HEK293 (cell line): ENCODE measurements at regions of chr17 and their contacts with region 1.

Region 1: GRCh38 chr17:1573916-1574696 is 11.5 kb upstream of the PITPNA start:
- H3K4me3 ChIP-seq: no peak overlapping the region
- H3K27ac ChIP-seq: no peak overlapping the region
- H3K4me1 ChIP-seq: no peaks in the 10 kb centered on the region; the same call in 1 of the 2 replicates
- CTCF ChIP-seq: peak; percentile 98

Region 2: DNA sequence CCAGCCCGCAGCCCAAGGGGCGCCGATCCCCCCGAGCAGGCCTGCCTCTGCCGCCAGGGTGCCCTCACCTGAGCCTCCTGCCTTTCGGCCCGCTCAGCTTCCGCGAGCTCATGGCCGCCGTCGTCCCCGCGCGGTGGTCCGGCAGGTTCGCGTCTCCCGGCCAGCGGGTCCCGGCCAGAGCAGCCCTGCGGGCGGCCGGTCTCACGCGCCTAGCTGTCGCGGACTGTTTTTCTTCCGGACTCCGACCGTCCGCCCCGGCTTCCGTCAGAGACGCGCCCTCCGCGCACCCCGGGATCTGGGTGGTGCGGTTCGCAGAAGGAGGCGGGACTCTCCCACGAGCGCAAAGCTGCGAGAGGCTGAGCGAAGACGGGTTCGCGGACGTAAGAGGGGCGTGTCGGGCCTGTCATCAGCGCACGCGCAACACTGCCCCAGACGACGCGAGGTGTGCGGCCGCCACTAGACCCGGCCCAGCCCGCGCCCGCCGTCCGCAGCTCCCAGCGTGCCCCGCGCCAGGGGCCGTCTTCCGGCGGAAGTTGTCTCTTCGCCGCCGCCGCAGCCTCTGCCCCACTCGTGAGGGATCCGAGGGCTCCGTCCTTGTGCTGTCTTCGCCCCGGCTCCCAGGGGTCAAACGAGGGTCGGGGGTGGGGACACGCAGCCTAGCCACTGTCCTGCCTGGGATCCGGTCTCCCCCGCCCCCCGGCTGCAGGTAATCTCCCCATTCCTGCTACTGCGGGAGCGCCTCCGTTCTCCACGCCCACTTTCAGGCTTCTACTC is 57.5 kb before region 1 on chr17 and contains the start of gene INPP5K:
- CTCF ChIA-PET with region 1: interaction called, 11 read pairs
- POLR2A ChIA-PET with region 1: interaction called, 5 read pairs
- H3K4me3 ChIP-seq: peak within 1 kb of the TSS; percentile 96
- H3K27ac ChIP-seq: peak within 1 kb of the TSS; percentile 62
- H3K4me1 ChIP-seq: no peaks in the 10 kb centered on the region
- CTCF ChIP-seq: peak; percentile 57

Region 3: DNA sequence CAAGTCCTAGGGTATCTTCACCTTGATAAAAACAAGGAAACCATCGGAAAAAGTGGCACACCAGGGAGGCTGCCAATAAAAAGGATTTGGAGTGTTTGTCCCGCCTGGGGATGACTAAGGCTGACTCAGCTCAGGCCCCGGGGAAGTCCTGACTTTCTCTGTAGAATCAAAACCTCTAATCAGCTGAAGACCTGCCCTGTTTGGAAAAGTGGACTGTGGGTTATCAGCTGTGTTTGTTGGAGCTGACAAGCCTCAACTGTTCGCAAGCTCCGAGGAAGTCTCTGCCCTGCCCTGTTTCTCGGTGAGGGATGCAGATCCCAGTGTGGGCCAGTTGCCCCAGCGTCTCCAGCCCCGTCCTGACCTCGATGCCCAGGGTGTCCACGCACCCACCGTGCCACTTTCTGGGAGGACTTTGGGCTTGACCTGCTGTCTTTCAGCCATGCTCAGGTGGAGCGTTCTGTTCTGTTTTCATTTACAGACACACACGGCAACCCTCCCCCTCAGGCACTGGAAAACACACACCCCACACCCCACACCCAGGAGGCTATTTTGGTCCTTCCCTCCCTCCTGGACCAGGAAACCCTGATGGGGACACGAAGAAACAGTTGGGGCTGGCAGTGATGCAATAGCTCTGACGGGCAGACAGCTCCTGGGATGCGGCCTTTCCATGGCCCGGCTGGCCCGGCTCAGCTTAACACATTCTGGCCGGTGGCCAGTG is 16.1 kb after region 1 on chr17:
- CTCF ChIA-PET with region 1: interaction called, 14 read pairs
- POLR2A ChIA-PET with region 1: interaction called, 7 read pairs
- H3K4me3 ChIP-seq: no peak overlapping the region
- H3K27ac ChIP-seq: no peak overlapping the region
- H3K4me1 ChIP-seq: peaks cover 8% of the 10 kb centered on the region
- CTCF ChIP-seq: no peak

Region 4: DNA sequence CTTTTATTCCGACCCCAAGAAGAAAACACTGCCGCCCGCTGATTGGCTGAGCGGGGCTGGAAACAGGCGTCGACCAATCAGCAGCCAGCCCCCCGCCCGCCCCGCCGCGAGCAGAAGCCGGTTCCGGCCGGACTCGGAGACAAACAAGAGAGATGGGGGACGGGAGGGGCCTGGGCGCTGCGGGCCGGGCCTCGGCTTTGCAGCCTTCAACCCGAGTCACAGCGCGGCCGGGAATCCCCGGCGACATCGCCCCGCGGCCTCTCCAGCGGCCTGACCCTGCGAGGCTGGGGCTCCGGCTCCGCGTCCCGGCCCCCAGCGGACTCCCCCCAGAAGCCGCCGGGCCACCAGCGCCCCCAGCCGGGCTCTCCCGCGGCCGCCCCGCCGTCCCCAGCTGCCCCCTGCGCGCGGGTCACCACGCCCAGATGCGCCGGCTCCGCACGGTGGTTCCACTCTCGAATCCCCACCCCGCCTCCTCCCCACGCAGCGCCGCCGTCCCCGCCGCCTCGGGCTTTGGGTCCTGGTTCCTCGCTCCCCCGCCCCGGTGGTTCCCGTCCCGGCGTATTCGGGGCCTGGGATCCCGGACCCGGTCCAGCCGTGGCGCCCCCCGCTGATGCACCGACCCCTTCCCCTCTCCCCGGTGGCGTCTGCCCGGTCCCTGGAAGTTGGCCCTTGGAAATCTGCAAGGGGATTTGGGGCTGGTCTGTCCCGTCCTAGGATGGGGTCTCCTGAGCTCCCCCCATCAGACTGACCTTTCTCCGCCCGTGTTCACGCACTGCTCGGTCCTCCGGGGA is 54.9 kb after region 1 on chr17:
- CTCF ChIA-PET with region 1: interaction called, 44 read pairs
- POLR2A ChIA-PET with region 1: interaction called, 20 read pairs
- H3K4me3 ChIP-seq: peak overlapping the region; percentile 66
- H3K27ac ChIP-seq: peak overlapping the region; percentile 84; the same call in 1 of the 2 replicates
- H3K4me1 ChIP-seq: no peaks in the 10 kb centered on the region; the same call in 1 of the 2 replicates
- CTCF ChIP-seq: no peak

Region 5: DNA sequence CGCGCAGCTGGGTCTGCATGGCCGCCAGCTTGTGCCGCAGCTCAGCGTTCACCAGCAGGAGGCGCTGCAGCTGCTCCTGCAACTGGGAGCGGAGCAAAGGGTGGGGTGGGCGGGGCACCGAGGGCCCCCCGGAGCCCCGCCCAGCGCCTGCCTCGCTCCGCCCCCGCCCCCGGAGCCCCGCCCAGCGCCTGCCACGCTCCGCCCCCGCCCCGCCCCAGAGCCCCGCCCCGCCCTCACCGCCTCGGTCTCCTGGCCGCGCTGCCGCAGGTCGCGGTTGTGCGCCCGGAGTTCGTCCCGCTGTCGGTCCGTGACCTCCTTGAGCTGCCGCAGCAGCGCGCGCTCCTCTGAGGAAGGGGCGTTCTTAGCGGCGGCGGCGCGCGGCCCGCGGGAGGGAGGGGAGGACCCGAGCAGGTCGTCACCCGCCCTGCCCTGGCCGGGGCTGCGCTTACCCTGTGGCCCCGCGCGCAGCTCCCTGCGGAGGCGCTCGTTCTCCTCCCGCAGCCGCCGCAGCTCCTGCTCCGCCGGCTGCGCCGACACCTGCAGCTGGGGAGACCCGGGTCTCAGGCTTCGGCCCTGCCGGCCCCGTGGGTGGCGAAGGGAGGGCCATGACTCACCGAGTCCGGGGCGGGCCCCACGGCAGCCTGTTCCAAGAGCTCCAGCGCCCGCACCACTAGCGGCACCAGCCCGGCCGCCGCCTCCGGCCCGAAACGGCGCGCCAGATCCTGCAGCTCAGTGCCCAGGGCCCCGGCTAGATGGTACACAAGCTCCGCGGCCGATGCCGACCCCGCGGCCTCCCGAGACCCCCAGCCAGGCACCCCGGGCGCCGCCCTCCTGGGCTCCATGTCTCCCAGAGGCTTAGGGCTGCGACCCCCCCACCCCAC is 75.1 kb after region 1 on chr17:
- CTCF ChIA-PET with region 1: interaction called, 69 read pairs
- POLR2A ChIA-PET with region 1: interaction called, 17 read pairs
- H3K4me3 ChIP-seq: peak overlapping the region; percentile 61
- H3K27ac ChIP-seq: peak overlapping the region; percentile 86
- H3K4me1 ChIP-seq: peaks cover 8% of the 10 kb centered on the region
- CTCF ChIP-seq: peak; percentile 23